Activated CD4-positive, alpha-beta memory T cell treated with anti-CD3 and anti-CD28 coated beads for 36 hours (primary cell): ENCODE measurements at regions of chr16 and their contacts with region 1.

Region 1: DNA sequence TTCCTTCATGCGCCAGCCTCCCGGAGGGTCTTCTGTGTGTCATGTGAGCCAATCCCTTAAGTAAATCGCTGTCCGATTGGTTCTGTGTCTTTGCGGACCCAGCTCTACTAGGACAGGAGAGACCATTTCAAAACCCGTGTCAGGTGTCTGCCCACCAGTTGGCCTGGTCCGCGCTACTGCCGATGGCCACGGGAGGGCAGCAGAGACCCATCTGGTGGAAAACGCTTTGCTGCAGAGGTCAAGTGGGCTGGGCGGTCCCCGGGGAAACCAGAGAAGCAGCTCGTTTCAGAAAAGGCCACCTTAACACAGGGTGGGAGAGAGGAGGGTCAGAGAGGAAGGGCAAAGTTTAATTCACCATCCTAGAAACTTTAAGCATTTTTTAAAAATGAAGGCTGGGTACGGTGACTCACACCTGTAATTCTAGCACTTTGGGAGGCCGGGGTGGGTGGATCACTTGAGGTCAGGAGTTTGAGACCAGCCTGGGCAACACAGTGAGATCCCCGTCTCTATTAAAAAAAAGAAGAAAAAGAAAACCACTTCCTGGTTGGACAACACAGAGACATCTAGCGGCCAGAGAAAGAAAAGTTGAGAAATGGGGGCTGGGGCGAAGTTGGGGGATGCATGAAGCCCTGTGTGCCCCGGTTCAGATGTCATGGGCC is 2.8 kb upstream of the CIBAR2 start:
- DNase-seq: peak; percentile 91
- H3K4me3 Mint-ChIP-seq: peak overlapping the region; percentile 55
- H3K27ac Mint-ChIP-seq: no peak overlapping the region
- H3K4me1 Mint-ChIP-seq: peaks cover 8% of the 10 kb centered on the region
- H3K27me3 Mint-ChIP-seq: no peaks in the 10 kb centered on the region

Region 2: DNA sequence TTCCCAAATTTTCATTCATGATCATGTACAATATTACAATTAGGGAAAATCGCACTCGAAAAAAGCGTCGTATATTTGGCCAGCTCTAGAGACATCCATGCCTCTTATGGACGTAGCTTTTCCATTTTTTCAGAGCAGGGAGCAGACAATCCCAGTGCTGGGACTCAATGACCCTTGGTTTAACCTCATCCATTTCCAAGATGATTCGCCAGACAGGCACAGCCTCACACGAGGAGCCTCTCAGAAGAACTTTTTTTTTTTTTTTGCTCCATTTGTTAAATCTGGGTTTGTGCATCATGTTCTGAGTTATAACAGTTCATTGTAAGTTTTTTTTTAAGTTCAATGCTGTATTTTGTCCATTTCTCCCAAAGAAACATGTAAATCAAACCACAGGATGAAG is 195.8 kb before region 1 on chr16:
- CTCF ChIA-PET with region 1: no interaction called
- POLR2A ChIA-PET with region 1: no interaction called
- intact Hi-C with region 1: no loop called
- DNase-seq: no peak
- H3K4me3 Mint-ChIP-seq: no peak overlapping the region
- H3K27ac Mint-ChIP-seq: no peak overlapping the region
- H3K4me1 Mint-ChIP-seq: no peaks in the 10 kb centered on the region
- H3K27me3 Mint-ChIP-seq: peaks cover 14% of the 10 kb centered on the region

Region 3: DNA sequence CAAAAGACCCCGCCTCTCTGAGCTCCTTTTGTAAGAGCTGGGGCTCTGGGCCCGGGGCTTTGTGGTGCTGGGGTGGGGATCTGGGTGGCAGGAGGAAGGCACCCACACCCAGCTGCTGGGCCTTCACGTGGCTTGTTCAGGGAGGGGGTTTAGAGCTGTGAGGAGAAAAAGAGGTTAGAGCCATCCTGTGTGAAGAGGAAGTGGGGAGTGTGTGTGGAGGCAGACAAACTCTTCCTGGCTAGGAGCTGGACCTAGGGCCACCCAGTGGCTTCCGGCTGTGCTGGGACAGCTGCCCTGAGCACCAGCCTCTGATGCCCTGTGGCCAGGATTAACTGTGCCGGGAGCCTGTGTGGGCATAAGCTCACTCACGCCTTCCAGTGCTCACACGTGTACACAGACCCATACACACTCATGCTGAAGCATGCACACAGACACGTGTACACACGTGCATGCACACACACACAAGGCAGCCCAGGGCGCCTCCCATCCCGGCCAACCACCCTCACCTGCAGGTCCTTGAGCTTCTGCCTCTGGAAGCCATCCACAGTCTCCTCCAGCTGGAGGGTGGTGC is 10.1 kb before region 1 on chr16:
- CTCF ChIA-PET with region 1: interaction called, 26 read pairs
- POLR2A ChIA-PET with region 1: no interaction called
- intact Hi-C with region 1: no loop called
- DNase-seq: peak; percentile 16
- H3K4me3 Mint-ChIP-seq: no peak overlapping the region
- H3K27ac Mint-ChIP-seq: no peak overlapping the region
- H3K4me1 Mint-ChIP-seq: peaks cover 25% of the 10 kb centered on the region
- H3K27me3 Mint-ChIP-seq: no peaks in the 10 kb centered on the region

Region 4: DNA sequence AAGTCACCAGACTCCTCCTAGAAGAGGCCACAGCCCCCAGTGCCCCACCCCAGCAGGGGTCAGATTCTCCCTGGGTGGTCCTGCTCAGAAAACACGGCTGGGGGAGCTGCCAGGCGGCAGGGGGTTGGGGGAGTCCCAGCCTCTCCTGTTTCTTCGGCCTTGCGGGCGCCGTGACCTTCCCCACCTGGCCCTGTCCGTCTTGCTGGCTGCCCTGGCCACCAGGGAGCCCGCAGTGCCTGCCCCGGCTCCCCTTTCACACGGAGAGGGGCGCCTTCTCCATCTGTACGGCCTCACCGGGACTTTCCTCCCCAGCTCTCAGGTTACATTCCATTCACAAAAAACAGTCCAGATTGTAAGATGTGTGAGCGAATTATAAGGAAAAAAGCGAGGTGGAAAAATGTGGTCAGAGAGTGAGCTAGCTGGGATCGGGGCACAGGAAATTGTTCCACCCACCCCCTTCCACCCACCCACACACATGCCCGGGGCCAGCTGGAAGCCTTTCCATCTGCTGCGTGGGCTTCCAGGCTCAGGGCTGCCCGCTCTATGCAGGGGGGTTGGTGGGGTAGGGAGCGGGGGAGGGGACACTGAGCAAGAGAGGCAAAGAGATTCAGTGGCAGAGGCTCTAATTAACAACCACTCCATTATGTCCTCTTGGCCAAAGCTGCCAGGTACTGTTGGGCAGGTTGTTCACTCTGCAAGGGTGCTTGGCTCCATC is 11.8 kb after region 1 on chr16:
- CTCF ChIA-PET with region 1: interaction called, 17 read pairs
- POLR2A ChIA-PET with region 1: no interaction called
- intact Hi-C with region 1: no loop called
- DNase-seq: peak; percentile 44
- H3K4me3 Mint-ChIP-seq: no peak overlapping the region
- H3K27ac Mint-ChIP-seq: no peak overlapping the region
- H3K4me1 Mint-ChIP-seq: peaks cover 12% of the 10 kb centered on the region
- H3K27me3 Mint-ChIP-seq: no peaks in the 10 kb centered on the region

Region 5: DNA sequence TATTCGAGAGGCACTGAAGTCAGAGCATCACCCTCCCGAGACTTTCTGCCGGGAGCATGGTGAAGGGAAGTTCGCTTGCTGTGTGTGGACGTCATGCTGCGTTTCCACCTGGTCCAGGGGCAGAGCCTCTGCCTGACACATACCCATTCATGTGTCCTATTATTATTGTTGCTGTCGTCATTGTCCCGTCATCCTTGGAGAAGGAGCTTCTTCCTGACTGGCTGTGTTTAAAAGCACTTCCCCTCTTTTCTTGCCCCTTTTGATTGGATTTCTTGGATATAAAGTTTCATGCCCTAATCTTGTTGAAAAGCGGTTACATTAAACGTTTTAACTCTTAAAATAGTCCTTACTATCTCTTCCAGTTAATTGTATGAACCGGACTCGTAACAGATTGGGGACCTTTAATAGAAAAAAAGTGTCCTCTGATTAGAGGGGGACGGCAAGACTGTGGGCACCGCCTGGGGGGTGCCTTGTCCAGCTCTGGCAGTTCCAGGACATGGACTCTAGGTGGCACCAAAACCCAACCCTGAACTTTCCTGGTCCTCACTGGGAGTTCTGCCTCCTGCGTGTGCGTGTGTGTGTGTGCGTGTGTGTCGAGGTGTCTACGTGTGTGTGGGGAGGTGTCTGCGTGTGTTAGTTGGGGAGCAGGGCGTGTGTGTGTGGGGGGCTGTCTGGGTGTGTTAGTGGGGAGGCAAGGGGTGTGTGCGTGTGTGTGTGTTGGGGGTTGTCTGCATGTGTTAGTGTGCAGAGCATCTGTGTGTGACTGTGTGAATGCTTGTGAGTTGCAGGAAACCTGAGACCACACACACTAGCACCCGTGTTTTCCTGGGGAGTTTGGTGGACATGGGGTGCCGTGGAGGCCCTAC is 130.5 kb after region 1 on chr16:
- CTCF ChIA-PET with region 1: interaction called, 5 read pairs
- POLR2A ChIA-PET with region 1: no interaction called
- intact Hi-C with region 1: loop called (anchors 10 kb)
- DNase-seq: peak; percentile 64
- H3K4me3 Mint-ChIP-seq: no peak overlapping the region
- H3K27ac Mint-ChIP-seq: no peak overlapping the region
- H3K4me1 Mint-ChIP-seq: peaks cover 2% of the 10 kb centered on the region
- H3K27me3 Mint-ChIP-seq: peaks cover 6% of the 10 kb centered on the region

Region 6: DNA sequence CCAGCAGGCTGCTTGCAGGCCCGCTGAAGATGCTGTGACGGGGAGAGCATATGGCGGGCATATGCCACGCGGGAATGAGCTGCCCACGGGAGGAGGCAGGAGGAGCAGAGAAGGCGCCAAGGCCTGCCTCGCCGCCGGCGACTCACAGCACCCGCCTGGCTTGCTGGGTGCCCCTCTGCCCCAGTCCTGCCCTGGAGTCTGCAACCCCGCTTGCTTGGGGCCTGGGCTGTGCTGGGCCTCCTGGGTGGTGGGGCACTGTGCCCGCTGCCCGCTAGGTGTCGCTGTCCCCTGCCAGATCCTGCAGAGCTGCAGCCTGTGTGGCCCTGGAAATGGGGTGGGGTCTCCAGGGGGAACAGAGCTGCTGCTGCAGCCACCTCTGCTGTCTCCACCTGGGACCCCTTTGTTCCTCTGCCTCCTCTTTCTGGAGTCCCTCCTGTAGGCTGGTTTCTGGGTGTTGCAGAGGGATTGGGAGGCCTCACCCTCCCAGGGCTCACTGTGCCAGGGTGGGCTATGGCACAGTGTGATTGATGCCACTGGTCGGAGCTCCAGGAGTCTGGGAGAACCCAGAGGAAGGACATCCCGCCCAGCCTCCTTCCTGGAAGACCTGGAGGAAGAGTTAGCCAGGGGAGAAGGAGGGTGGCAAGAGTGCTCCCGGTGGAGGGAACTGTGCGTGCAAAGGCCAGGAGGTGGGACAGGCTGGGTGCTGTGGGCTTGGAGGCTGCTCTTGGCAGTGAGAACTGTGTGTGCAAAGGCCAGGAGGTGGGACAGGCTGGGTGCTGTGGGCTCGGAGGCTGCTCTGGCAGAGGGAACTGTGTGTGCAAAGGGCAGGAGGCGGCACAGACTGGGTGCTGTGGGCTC is 138.3 kb after region 1 on chr16:
- CTCF ChIA-PET with region 1: interaction called, 10 read pairs
- POLR2A ChIA-PET with region 1: no interaction called
- intact Hi-C with region 1: loop called (anchors 10 kb)
- DNase-seq: peak; percentile 72
- H3K4me3 Mint-ChIP-seq: no peak overlapping the region
- H3K27ac Mint-ChIP-seq: no peak overlapping the region
- H3K4me1 Mint-ChIP-seq: no peaks in the 10 kb centered on the region
- H3K27me3 Mint-ChIP-seq: no peaks in the 10 kb centered on the region

Region 7: DNA sequence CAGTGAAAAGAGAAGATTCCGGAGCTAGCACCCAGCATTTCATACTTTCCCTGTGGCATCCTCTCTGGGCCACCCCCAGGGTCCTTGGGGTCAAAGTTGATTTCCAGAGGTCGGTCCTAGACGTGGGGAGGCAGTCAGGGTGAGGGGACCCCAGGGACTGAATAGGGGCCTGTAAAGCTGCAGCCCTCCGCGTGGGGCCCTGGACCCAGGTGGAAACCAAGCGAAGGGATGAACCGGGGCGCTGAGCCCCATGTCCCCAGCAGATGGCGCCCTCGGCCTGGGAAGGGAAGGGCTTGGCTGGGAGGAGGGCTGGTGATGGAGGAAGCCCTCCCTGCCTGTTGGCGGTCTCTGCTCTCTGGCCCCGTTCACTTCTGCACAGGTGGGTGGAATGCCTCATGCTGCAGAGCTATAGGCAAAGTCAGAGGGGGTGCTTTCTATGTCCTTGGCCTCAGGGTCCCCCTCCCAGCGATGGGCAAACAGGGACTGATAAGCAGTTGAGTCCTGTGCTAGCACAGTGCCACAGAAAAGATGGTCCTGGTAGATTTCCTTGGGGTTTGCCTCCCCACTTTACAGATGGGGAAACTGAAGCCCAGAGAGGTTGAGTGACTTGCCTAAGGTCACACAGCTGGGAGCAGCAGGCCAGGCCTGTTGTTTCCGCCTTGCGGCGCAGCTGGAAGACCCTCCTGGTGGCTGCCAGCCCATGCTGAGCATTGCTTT is 160.7 kb after region 1 on chr16:
- CTCF ChIA-PET with region 1: interaction called, 12 read pairs
- POLR2A ChIA-PET with region 1: no interaction called
- intact Hi-C with region 1: no loop called
- DNase-seq: peak; percentile 73
- H3K4me3 Mint-ChIP-seq: no peak overlapping the region
- H3K27ac Mint-ChIP-seq: no peak overlapping the region
- H3K4me1 Mint-ChIP-seq: no peaks in the 10 kb centered on the region
- H3K27me3 Mint-ChIP-seq: peaks cover 3% of the 10 kb centered on the region